IMR-90 (cell line): ENCODE measurements at regions of chr15 and their contacts with region 1.

Region 1: GRCh38 chr15:77419836-77420609 is at the start of gene PEAK1:
- DNase-seq: peak; percentile 98
- ATAC-seq: peak; percentile 95
- H3K4me3 ChIP-seq: peak within 1 kb of the TSS; percentile 94
- H3K27ac ChIP-seq: peak within 1 kb of the TSS; percentile 99
- H3K4me1 ChIP-seq: peaks cover 12% of the 10 kb centered on the region
- H3K27me3 ChIP-seq: no peaks in the 10 kb centered on the region
- CTCF ChIP-seq: no peak
- POLR2A ChIP-seq: peak; percentile 91
- RAD21 ChIP-seq: peak; percentile 1; the same call in 1 of the 2 replicates
- total RNA-seq, gene PEAK1: 43.9 and 49.2 TPM in 2 replicates

Region 2: DNA sequence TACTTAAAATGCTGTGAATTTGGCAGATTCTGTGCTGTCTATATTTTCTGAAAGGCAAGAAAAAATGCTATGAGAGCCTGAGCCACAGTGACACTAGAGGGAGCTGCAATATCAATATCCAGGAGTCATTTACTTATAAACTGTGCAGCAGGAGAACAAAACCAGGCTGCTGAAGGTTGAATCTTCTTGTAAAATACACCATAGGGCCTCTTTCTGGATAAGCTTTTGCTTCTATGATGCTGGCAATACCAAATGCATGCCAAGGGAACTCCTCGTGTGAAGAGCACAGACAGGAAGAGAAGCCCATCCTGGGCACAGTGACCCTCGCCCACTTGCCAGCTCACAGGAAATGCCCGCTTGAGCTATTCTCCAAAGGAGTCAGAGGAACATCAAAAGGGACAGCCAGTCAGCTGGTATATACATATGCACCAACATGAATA is 301.1 kb before region 1 on chr15:
- CTCF ChIA-PET with region 1: interaction called, 5 read pairs
- POLR2A ChIA-PET with region 1: no interaction called
- dilution Hi-C with region 1: no loop called
- in situ Hi-C with region 1: no loop called
- intact Hi-C with region 1: loop called (anchors 2 kb)
- DNase-seq: peak; percentile 80
- ATAC-seq: peak; percentile 89
- H3K4me3 ChIP-seq: no peak overlapping the region
- H3K27ac ChIP-seq: peak overlapping the region; percentile 59; the same call in 1 of the 2 replicates
- H3K4me1 ChIP-seq: peaks cover 8% of the 10 kb centered on the region
- H3K27me3 ChIP-seq: no peaks in the 10 kb centered on the region
- CTCF ChIP-seq: peak; percentile 95
- POLR2A ChIP-seq: no peak
- RAD21 ChIP-seq: peak; percentile 92

Region 3: DNA sequence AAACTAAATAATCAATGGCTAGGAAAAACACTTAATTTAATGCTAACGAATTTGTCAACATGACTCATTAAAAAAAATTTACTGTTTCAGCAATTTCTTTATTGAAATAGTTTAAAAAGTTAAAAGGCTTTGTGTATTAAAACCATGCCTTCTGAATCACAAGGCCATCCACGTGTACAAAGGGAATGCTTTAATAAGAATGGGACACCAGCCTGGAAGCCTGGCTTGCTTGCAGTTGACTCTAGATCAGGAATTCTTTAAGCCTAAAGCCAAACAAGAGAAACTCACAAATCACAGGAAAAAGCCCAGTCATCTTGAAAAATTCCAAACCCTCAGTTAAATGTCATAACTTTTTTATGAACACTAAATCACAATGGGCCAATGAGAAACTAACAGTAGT is 137.7 kb before region 1 on chr15:
- CTCF ChIA-PET with region 1: no interaction called
- POLR2A ChIA-PET with region 1: no interaction called
- dilution Hi-C with region 1: no loop called
- in situ Hi-C with region 1: no loop called
- intact Hi-C with region 1: loop called (anchors 2 kb)
- DNase-seq: peak; percentile 86
- ATAC-seq: peak; percentile 87
- H3K4me3 ChIP-seq: no peak overlapping the region
- H3K27ac ChIP-seq: no peak overlapping the region; the same call in 1 of the 2 replicates
- H3K4me1 ChIP-seq: peaks cover 4% of the 10 kb centered on the region
- H3K27me3 ChIP-seq: no peaks in the 10 kb centered on the region
- CTCF ChIP-seq: no peak
- POLR2A ChIP-seq: no peak
- RAD21 ChIP-seq: no peak

Region 4: GRCh38 chr15:77482570-77482969 is 62.5 kb after region 1 on chr15:
- CTCF ChIA-PET with region 1: no interaction called
- POLR2A ChIA-PET with region 1: no interaction called
- dilution Hi-C with region 1: no loop called
- in situ Hi-C with region 1: no loop called
- intact Hi-C with region 1: loop called (anchors 2 kb)
- DNase-seq: peak; percentile 86
- ATAC-seq: peak; percentile 82
- H3K4me3 ChIP-seq: no peak overlapping the region
- H3K27ac ChIP-seq: no peak overlapping the region; the same call in 1 of the 2 replicates
- H3K4me1 ChIP-seq: peaks cover 25% of the 10 kb centered on the region
- H3K27me3 ChIP-seq: no peaks in the 10 kb centered on the region
- CTCF ChIP-seq: no peak
- POLR2A ChIP-seq: no peak
- RAD21 ChIP-seq: no peak

Region 5: DNA sequence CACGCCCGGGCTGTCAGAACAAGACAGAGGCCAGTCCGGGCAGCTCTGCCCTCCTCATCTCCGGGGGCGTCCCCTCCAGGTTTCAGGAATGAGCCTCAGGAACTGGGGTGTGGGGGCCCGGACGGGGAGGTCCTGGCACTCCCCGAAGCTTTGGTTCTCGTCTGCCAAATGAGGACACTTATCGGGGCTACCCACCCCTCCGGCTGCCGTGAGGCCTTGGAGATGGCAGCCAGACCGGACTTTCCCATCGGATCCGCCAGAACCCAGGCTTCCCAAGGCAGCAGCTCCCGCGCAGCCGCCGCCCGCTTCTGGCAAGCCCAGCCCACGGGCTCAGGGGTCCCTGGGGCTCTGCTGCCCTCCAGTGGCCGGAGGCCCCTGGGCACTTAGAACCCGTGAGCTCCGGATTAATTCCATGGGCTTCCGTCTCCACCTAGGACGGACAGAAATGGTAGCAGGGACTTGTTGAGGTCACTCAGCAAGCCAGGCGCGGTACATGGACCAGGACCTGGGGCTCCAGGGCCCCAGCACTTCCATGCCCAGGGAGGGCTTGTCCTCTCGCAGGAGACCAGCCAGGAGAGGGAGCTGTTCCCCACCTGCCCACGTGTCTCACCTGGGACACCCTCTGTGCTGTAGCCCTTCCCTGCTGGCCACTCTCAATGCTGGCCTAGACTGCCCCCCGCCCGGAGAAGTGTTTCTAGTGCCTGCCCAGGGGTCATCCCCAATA is 123.3 kb after region 1 on chr15:
- CTCF ChIA-PET with region 1: interaction called, 6 read pairs
- POLR2A ChIA-PET with region 1: no interaction called
- dilution Hi-C with region 1: no loop called
- in situ Hi-C with region 1: no loop called
- intact Hi-C with region 1: loop called (anchors 2 kb)
- DNase-seq: peak; percentile 78
- ATAC-seq: peak; percentile 89
- H3K4me3 ChIP-seq: peak overlapping the region; percentile 11; the same call in 1 of the 2 replicates
- H3K27ac ChIP-seq: peak overlapping the region; percentile 25; the same call in 1 of the 2 replicates
- H3K4me1 ChIP-seq: peaks cover 18% of the 10 kb centered on the region
- H3K27me3 ChIP-seq: no peaks in the 10 kb centered on the region
- CTCF ChIP-seq: peak; percentile 99
- POLR2A ChIP-seq: no peak
- RAD21 ChIP-seq: peak; percentile 99